Endothelial cell of umbilical vein (primary cell): ENCODE measurements at regions of chr7 and their contacts with region 1.

Region 1: DNA sequence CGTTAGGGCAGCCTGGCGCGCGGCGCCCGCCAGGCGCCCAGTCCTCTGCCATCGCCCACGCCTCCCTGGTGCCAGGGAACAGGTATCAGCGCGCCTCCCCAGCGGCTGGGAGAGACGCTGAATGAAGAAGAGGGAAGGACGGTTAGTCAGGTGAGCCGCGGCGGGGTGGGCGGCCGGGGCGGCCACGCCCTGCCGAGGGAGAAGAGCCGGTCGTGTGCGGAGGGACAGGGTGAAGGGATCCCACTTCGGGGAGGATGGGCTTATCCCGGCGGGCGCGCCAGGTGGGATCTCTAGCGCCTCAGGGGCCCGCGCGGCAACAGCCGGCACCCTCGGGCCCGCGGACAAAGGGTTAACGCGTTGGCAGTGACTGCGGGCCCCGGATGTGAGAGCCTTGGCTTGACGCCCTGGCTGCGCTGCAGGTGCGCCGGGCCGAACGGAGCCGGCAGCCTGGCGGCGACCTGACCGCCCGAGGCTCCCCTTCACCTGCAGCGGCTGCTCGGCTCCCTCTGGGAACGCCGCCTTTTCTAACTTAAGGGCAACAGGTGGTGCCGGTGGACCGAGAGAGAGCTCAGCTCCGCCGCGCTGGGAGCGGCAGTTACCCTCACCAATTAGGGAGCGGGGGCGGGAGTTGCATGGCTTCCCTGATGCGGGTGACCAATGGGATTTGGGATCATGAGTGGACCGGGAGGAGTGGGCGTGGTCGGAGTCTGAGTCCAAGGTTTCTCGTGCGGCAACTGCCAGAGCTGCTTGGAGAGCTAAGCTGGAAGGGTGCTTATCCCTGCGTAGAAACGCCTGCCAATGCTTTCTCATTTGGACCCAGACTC is at the start of gene ARL4A:
- DNase-seq: peak; percentile 99
- H3K4me3 ChIP-seq: peak within 1 kb of the TSS; percentile 81 to 96 (median 93)
- H3K27ac ChIP-seq: peak within 1 kb of the TSS; percentile 88
- H3K4me1 ChIP-seq: peaks cover 16% of the 10 kb centered on the region
- H3K27me3 ChIP-seq: no peaks in the 10 kb centered on the region
- CTCF ChIP-seq: peak; percentile 26 to 43
- POLR2A ChIP-seq: peak; percentile 99
- total RNA-seq, gene ARL4A: 30.7 and 34.1 TPM in 2 replicates

Region 2: DNA sequence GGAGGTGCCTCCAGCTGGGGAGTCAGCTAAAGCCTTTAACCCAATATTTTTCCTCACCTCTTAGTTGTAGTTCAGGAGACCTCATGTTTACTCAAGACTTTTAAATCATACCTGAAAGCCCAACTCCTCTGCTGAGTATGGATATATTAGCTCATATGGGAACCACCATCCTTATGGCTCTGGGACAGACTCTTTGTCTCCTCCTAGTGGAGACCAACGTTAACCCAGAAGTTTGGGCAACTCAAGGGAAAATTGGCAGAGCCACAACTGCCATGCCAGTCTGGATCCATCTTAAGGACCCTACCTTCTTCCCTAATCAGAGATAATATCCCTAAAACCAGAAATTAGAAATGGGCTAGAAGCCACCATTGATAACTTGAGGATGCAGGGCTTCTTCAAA is 395.2 kb before region 1 on chr7:
- CTCF ChIA-PET with region 1: no interaction called
- POLR2A ChIA-PET with region 1: no interaction called
- dilution Hi-C with region 1: no loop called
- intact Hi-C with region 1: no loop called
- DNase-seq: peak; percentile 13
- H3K4me3 ChIP-seq: no peak overlapping the region
- H3K27ac ChIP-seq: no peak overlapping the region
- H3K4me1 ChIP-seq: no peaks in the 10 kb centered on the region
- H3K27me3 ChIP-seq: peaks cover 4% of the 10 kb centered on the region in 2 experiments
- CTCF ChIP-seq: peak; percentile 47 to 49
- POLR2A ChIP-seq: no peak

Region 3: GRCh38 chr7:12638851-12639467 is 48.1 kb before region 1 on chr7:
- CTCF ChIA-PET with region 1: interaction called, 21 read pairs
- POLR2A ChIA-PET with region 1: no interaction called
- dilution Hi-C with region 1: no loop called
- intact Hi-C with region 1: loop called (anchors 2 kb)
- DNase-seq: peak; percentile 50
- H3K4me3 ChIP-seq: no peak overlapping the region
- H3K27ac ChIP-seq: no peak overlapping the region
- H3K4me1 ChIP-seq: no peaks in the 10 kb centered on the region
- H3K27me3 ChIP-seq: peaks cover 8 to 9% of the 10 kb centered on the region in 2 experiments
- CTCF ChIP-seq: peak in 1 of 2 donors; percentile 17
- POLR2A ChIP-seq: no peak

Region 4: DNA sequence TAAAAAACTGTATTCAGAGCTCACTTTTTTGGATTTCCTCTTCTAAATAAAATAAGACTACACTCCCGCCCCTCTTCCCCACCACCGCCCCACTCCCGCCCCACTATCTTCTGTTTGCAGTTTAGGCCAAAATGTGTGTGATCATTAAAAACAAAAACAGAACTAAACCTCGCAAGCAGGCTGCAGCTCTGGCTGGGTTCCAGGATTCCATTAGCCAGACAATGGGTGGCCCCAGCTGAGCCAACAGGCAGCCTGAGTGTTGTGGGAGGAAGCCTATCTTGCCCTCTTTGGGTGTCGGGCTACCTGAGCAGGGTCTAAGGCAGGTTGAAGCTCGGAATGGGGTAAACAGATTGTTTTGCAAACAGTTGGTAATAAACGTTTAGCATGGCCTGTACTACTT is 42.0 kb after region 1 on chr7:
- CTCF ChIA-PET with region 1: interaction called, 51 read pairs
- POLR2A ChIA-PET with region 1: interaction called, 23 read pairs
- dilution Hi-C with region 1: no loop called
- intact Hi-C with region 1: loop called (anchors 1 kb)
- DNase-seq: peak; percentile 94
- H3K4me3 ChIP-seq: no peak overlapping the region
- H3K27ac ChIP-seq: peak overlapping the region; percentile 92
- H3K4me1 ChIP-seq: peaks cover 48% of the 10 kb centered on the region
- H3K27me3 ChIP-seq: no peaks in the 10 kb centered on the region
- CTCF ChIP-seq: no peak
- POLR2A ChIP-seq: no peak

Region 5: GRCh38 chr7:12866207-12866606 is 179.1 kb after region 1 on chr7:
- CTCF ChIA-PET with region 1: interaction called, 11 read pairs
- POLR2A ChIA-PET with region 1: interaction called, 3 read pairs
- dilution Hi-C with region 1: no loop called
- intact Hi-C with region 1: loop called (anchors 1 kb)
- DNase-seq: peak; percentile 54
- H3K4me3 ChIP-seq: no peak overlapping the region
- H3K27ac ChIP-seq: no peak overlapping the region
- H3K4me1 ChIP-seq: peaks cover 6% of the 10 kb centered on the region
- H3K27me3 ChIP-seq: no peaks in the 10 kb centered on the region
- CTCF ChIP-seq: no peak
- POLR2A ChIP-seq: no peak

Region 6: DNA sequence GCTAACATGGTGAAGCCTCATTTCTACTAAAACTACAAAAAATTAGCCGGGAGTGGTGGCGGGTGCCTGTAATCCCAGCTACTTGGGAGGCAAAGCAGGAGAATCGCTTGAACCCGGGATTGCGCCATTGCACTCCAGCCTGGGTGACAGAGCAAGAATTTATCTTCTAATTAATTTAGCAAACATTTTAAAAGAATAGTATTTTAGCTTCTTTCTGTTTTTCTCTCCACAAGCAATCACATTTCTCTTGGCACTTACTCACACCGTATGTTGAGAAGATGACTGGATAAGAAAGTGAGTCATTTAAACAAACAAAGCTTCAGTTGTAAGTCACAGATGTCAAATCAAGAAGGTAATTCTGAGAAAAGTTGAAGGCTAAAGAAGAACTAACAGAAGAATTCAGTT is 264.3 kb after region 1 on chr7:
- CTCF ChIA-PET with region 1: interaction called, 14 read pairs
- POLR2A ChIA-PET with region 1: no interaction called
- dilution Hi-C with region 1: no loop called
- intact Hi-C with region 1: loop called (anchors 2 kb)
- DNase-seq: peak; percentile 83
- H3K4me3 ChIP-seq: no peak overlapping the region
- H3K27ac ChIP-seq: peak overlapping the region; percentile 24
- H3K4me1 ChIP-seq: peaks cover 11% of the 10 kb centered on the region
- H3K27me3 ChIP-seq: no peaks in the 10 kb centered on the region
- CTCF ChIP-seq: no peak
- POLR2A ChIP-seq: no peak

Region 7: DNA sequence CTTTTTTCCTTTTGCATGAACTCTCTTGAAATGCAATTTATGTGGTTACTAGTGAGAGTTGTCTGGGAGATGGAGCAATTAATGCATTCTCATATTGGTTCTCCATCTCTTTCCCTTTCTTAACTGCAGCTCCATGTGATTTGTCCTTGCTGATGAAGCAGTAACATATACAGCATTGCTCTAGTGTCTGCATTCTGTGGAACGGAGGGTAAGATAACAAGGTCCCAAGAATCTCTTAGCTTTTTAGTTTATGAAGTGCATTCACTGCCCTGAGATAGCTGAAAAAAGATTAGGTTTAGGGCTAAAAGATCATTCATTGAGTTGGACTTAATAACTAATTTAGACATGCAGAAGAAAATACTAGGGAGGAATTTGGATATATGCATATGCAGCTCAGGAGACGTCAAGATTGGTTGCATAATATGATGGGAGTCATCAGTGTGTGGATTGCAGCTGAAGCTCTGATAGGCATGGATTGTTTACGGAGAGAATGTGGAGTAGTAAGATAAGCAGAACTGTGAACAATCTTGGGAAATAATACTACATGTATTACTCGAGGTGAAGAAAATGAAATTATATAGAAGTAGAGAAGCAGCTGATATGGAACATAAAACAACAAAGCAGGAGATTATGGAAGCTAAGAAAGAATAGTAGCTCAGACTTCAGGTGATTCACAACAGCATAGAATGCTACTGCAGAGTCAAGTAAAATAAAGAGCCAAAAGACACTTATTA is 405.0 kb after region 1 on chr7:
- CTCF ChIA-PET with region 1: interaction called, 15 read pairs
- POLR2A ChIA-PET with region 1: interaction called, 3 read pairs
- dilution Hi-C with region 1: no loop called
- intact Hi-C with region 1: no loop called
- DNase-seq: peak; percentile 76
- H3K4me3 ChIP-seq: no peak overlapping the region
- H3K27ac ChIP-seq: no peak overlapping the region
- H3K4me1 ChIP-seq: peaks cover 16% of the 10 kb centered on the region
- H3K27me3 ChIP-seq: no peaks in the 10 kb centered on the region
- CTCF ChIP-seq: no peak
- POLR2A ChIP-seq: no peak

Region 8: DNA sequence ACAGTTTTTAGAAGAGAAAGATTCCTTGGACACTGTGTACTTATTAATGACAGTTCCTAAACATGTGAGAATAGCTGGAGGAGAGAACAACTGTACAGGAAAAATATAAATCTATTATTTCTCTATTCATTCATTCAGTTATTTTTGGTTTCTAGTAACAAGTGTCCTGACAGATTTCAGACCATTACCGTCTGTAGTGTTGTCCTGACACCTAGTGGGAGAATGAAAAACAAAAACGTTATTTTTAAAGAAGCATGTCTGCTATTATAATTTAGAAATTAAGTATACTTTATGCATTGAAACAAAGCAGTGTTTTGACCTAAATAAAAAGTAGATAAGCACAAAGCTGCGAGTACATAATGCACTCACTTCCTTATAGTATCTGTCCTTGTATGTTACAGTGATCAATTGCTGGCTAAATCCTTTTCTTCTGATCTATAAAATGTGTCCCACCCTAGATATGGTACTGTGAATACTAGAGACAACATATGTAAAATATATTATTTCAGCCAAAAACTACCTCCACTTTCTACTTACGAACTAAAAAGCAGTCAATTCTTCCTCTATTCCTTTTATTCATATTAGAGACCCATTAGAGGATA is 575.9 kb after region 1 on chr7:
- CTCF ChIA-PET with region 1: interaction called, 118 read pairs
- POLR2A ChIA-PET with region 1: no interaction called
- dilution Hi-C with region 1: no loop called
- intact Hi-C with region 1: loop called (anchors 1 kb)
- DNase-seq: peak; percentile 70
- H3K4me3 ChIP-seq: no peak overlapping the region
- H3K27ac ChIP-seq: no peak overlapping the region
- H3K4me1 ChIP-seq: no peaks in the 10 kb centered on the region
- H3K27me3 ChIP-seq: peaks cover 0 to 3% of the 10 kb centered on the region in 2 experiments
- CTCF ChIP-seq: peak; percentile 25 to 33
- POLR2A ChIP-seq: no peak